IMR-90 (cell line): ENCODE measurements at regions of chr18 and their contacts with region 1.

Region 1: DNA sequence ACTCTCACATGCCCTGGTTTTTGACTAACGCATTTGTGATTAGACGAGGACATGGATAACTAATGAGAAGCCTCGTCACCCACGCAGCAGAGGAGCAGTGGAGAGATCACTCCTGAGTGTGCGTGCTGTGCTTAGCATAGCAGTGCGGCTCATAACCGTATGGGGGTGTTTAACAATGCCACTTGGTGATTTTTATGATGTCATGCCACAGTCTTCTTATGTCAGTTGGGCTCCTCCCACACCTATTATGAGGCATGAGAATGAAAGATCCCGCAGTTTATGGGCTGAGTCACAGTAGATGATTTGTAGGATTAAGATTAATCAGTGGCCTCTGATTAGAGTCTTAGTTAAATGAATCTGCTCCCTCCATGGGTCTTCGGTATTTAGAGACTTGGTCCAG is 2.5 kb upstream of the SMIM21 start:
- DNase-seq: no peak
- ATAC-seq: no peak
- H3K4me3 ChIP-seq: no peak overlapping the region
- H3K27ac ChIP-seq: no peak overlapping the region
- H3K4me1 ChIP-seq: no peaks in the 10 kb centered on the region
- H3K27me3 ChIP-seq: peaks cover 5% of the 10 kb centered on the region
- CTCF ChIP-seq: no peak
- POLR2A ChIP-seq: no peak
- RAD21 ChIP-seq: no peak

Region 2: DNA sequence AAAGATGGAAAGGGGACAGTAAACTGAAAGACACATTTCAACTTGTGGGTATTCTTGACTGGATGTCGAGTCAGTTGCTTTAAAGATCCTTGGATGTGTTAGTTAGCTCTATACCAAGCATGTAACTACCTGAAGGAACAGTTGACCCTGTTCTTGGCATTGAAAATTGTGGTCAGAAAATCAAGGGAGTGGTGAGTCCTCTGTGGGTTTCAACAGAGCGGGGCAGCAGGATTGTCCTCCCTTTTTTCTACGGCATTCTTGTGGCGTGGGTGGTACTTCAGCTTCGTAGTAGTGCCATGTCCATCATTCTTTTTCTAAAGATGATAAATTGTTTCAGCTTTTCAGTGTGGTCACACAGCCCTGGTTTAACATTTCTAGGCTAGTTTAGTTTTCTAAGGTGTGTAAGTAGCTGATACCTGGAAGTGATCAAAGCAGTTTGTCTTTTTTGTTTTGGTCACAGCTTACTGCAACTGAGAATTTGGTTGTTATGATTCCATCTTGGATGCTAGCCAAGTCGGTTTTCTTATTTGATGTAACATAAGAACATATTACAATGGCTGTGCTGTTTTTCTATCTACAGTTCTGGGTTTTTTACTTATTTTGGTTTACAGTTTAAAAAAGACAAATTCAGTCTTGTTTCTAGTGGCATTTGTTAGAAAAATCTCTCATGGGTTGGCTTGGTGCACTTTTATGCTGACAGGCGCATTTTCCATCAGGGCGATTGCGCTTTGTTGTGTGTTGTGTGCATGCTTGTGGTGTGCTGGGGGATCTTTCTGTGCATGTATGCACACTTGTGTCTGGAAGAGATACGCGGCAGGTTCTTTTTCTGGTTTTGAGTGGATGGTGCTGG is 747.6 kb before region 1 on chr18:
- CTCF ChIA-PET with region 1: no interaction called
- POLR2A ChIA-PET with region 1: no interaction called
- dilution Hi-C with region 1: no loop called
- in situ Hi-C with region 1: no loop called
- intact Hi-C with region 1: no loop called
- DNase-seq: no peak
- ATAC-seq: no peak
- H3K4me3 ChIP-seq: no peak overlapping the region
- H3K27ac ChIP-seq: no peak overlapping the region
- H3K4me1 ChIP-seq: 0 out of 2 replicates have a peak, but pooled peaks cover 2% of the 10 kb centered on the region
- H3K27me3 ChIP-seq: no peaks in the 10 kb centered on the region
- CTCF ChIP-seq: no peak
- POLR2A ChIP-seq: no peak
- RAD21 ChIP-seq: no peak

Region 3: DNA sequence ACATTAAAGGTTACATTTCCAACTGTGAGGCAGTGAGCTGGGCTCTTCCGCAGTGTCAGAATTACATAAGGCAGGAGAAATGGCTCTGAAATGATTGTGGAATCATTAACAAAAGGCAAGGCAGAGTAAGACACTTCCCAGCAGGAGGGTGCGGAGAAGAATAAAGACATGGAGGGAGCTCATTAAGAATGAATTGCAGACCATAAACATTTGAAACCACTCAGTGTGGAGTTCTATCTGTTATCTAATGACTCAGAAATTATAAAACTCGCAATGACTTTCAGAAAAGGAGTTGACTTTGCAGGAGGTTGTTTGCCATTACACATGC is 79.5 kb before region 1 on chr18:
- CTCF ChIA-PET with region 1: interaction called, 10 read pairs
- POLR2A ChIA-PET with region 1: no interaction called
- dilution Hi-C with region 1: no loop called
- in situ Hi-C with region 1: no loop called
- intact Hi-C with region 1: no loop called
- DNase-seq: no peak
- ATAC-seq: no peak
- H3K4me3 ChIP-seq: no peak overlapping the region
- H3K27ac ChIP-seq: no peak overlapping the region
- H3K4me1 ChIP-seq: no peaks in the 10 kb centered on the region
- H3K27me3 ChIP-seq: no peaks in the 10 kb centered on the region; the same call in 1 of the 2 replicates
- CTCF ChIP-seq: no peak
- POLR2A ChIP-seq: no peak
- RAD21 ChIP-seq: no peak